Activated T-helper 1 cell treated with anti-CD3 and anti-CD28 coated beads, Interleukin-12 subunit alpha, Interleukin-12 subunit beta, Interleukin-2, Interleukin-4 antibody, amounts not matched to agents 30 ng/mL and 10 ng/mL and 1 ng/mL, durations not matched to agents 14 hours and 24 hours and 36 hours (primary cell): ENCODE measurements at regions of chr17 and their contacts with region 1.

Region 1: DNA sequence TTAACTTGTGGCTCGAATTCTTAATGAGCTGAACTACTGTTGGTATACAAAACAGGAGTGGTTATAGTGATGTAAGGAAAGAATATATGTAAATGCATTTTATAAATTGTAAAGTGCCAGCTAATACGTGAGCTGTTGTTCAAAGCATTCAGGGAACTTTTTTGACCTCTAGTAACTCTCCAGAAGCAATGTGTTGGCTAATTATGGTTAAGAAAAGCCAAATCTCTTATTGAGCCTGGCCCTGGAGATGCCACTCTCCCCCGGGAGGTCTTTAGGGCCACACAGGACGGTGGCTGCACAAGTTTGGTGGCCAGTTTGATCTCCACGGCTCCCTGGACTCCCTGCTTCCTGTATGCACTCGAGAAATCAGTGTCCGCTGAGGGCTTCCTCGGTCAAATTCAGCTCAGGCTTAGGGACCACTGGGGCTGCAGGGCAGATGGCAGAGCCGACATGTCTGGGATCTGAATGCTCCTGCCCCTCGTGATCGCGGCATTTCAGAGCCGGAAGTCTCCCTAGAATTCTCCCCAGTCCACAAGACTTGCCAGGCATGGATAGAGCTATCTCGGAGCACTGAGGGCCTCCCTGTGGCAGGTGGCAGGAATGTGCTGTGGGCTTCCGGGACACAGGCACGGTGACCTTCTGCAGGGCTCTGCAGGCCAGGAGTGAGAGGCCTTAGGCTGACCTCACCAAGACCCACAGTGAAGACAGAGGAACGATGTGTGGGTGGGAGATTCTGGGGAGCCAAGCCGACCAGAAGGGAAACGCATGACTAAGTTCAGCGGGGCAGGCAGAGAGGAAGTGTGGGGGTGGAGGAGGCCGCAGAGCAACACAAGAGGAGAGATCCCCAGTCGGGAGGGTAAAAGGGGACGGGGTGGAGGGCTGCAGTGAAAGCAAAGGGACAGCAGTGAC is 18.6 kb upstream of the PITPNM3 start:
- DNase-seq: peak; percentile 16
- H3K4me3 Mint-ChIP-seq: peak overlapping the region; percentile 66
- H3K27ac Mint-ChIP-seq: peak overlapping the region; percentile 79
- H3K4me1 Mint-ChIP-seq: peaks cover 36% of the 10 kb centered on the region
- H3K27me3 Mint-ChIP-seq: no peaks in the 10 kb centered on the region

Region 2: DNA sequence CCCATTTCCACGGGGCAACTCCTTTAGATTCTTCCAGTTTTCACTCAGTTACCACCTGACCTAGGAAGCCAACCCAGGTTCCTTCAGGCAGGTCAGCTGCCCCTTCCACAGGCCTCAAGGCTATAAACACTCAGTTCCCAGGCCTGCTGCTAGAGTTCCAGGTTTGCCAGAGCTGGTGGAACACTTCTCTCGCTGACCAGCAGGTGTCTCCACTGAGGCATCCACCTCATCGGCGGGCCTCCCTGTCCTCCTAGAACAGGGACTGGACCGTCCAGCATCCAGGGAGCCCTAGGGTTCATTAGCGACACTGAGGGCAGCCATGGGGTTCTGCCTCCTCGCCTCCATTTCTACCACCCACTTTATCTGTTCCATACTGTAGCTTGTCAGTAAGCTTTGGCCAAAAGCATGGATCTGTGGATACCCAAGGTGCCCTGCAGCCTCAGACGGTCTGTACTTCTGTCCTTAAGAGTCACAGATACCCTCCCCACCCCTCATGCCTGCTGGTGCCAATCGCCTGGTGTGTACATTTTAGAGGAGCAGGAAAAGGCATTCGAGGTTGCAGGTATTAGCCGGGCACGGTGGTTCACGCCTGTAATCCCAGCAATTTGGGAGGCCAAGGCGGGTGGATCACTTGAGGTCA is 101.7 kb before region 1 on chr17:
- intact Hi-C with region 1: loop called (anchors 1 kb)
- DNase-seq: peak; percentile 57
- H3K4me3 Mint-ChIP-seq: no peak overlapping the region
- H3K27ac Mint-ChIP-seq: no peak overlapping the region
- H3K4me1 Mint-ChIP-seq: no peaks in the 10 kb centered on the region
- H3K27me3 Mint-ChIP-seq: no peaks in the 10 kb centered on the region

Region 3: GRCh38 chr17:6509031-6509771 is 65.7 kb before region 1 on chr17:
- intact Hi-C with region 1: no loop called
- DNase-seq: no peak
- H3K4me3 Mint-ChIP-seq: no peak overlapping the region
- H3K27ac Mint-ChIP-seq: no peak overlapping the region
- H3K4me1 Mint-ChIP-seq: no peaks in the 10 kb centered on the region
- H3K27me3 Mint-ChIP-seq: peaks cover 11% of the 10 kb centered on the region

Region 4: DNA sequence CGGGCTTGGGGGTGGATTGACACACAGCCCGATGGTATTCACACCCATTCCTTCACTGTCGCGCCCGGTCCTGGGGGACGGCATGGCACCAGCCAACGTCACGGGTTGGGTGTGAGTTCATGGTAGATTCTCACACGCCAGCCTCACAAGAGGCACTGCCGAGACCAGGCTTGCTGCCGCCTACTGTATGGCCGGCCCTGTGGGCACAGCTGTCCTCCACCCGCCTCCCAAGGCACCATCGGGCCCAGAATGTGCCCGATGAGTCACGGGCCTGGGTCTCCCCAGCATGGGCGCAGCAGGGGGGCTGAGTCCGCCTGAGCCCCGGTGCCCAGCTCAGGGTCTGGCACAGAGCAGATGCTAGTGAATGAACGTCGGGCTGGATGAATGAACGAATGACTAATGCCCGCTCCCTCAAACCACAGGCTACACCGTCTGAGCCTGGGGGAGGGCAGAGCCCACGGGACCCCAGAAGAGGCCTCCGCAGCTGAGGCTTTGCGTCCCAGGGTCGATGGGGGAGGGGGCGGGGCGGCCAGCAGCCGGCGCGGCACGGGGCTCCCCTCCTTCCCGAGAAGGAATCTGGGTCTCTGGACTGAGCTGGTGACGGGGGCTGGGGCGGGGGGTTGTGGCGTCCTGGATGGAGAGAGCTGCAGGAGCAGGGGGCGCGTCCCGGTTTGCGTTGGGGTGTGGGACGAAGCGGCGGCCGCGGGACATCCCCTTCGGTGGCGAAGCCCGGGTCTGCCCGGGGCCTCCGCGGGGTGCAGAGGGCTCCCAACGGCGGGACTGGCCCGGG is 19.4 kb before region 1 on chr17:
- intact Hi-C with region 1: loop called (anchors 2 kb)
- DNase-seq: no peak
- H3K4me3 Mint-ChIP-seq: peak overlapping the region; percentile 64
- H3K27ac Mint-ChIP-seq: no peak overlapping the region
- H3K4me1 Mint-ChIP-seq: peaks cover 5% of the 10 kb centered on the region
- H3K27me3 Mint-ChIP-seq: peaks cover 54% of the 10 kb centered on the region